Activated CD4-positive, alpha-beta T cell treated with anti-CD3 and anti-CD28 coated beads for 36 hours (primary cell): ENCODE measurements at regions of chr19 and their contacts with region 1.

Region 1: GRCh38 chr19:13952154-13953035 is at the start of gene DCAF15:
- DNase-seq: peak; percentile 100
- ATAC-seq: peak; percentile 99
- H3K4me3 Mint-ChIP-seq: peak within 1 kb of the TSS; percentile 88
- H3K27ac Mint-ChIP-seq: peak within 1 kb of the TSS; percentile 81
- H3K4me1 Mint-ChIP-seq: peaks cover 16% of the 10 kb centered on the region
- H3K27me3 Mint-ChIP-seq: no peaks in the 10 kb centered on the region
- total RNA-seq, gene DCAF15: 55.8 to 61.6 TPM

Region 2: DNA sequence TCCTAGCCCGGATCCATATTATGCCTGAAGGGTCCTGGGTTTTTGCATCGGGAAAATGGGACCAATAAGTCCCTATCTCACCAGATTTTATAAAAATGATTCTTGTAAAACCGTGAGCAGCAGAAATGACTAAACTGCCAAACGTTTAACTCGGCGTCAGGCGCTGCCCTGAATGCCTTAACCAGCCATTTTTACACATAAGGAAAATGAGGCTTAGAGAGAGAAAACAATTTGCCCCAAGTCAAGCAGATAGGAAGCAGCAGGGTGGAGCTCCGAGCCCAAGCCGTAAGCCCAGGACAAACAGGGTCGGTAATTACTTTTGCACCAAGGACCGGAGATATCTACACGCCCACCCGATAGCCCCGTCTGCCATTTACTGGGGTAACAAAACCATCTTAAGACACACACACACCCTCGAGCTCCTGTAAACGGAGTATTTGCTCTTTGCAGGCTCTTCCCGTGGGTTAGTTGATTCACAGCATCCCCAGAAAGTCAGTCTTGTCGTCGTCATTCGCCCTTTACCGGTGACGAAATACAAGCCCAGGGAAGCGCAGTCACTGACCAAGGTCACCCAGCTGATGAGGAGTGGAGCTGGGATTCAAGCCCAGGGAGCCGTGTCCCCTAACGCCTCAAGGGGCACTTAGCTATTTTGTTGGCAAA is 204.1 kb before region 1 on chr19:
- CTCF ChIA-PET with region 1: no interaction called
- POLR2A ChIA-PET with region 1: interaction called, 3 read pairs
- intact Hi-C with region 1: loop called in 1 of 2 experiments (anchors 1 kb)
- DNase-seq: peak; percentile 50
- ATAC-seq: peak; percentile 2
- H3K4me3 Mint-ChIP-seq: peak overlapping the region; percentile 80
- H3K27ac Mint-ChIP-seq: peak overlapping the region; percentile 84
- H3K4me1 Mint-ChIP-seq: peaks cover 30% of the 10 kb centered on the region
- H3K27me3 Mint-ChIP-seq: no peaks in the 10 kb centered on the region

Region 3: DNA sequence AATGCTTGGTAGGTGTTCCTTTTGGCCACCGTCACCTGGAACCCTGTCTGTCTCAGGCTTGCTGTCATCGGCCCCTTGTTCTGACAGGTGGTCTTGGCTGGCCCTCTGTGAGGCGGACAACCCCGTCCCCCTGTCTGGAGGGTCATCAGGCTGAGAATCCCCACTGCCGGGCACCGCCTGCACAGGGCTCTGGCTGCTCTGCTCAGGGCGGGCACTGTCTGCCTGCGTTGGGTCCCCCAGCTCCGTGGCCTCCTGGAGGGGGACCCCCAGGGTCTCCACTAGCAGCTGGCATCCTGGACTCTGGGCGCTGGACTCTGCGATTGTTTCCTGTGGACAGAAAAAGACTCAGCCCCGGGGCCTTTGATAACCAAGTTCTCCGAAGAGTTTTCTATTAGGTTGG is 62.3 kb before region 1 on chr19:
- CTCF ChIA-PET with region 1: no interaction called
- POLR2A ChIA-PET with region 1: no interaction called
- intact Hi-C with region 1: no loop called
- DNase-seq: no peak
- ATAC-seq: no peak
- H3K4me3 Mint-ChIP-seq: no peak overlapping the region
- H3K27ac Mint-ChIP-seq: no peak overlapping the region
- H3K4me1 Mint-ChIP-seq: no peaks in the 10 kb centered on the region
- H3K27me3 Mint-ChIP-seq: no peaks in the 10 kb centered on the region

Region 4: GRCh38 chr19:13905938-13906904 is 46.2 kb before region 1 on chr19 and contains the starts of genes BRME1 and CC2D1A:
- CTCF ChIA-PET with region 1: interaction called, 3 read pairs
- POLR2A ChIA-PET with region 1: no interaction called
- intact Hi-C with region 1: loop called in 1 of 2 experiments (anchors 1 kb)
- DNase-seq: peak; percentile 99
- ATAC-seq: peak; percentile 97
- H3K4me3 Mint-ChIP-seq: peak within 1 kb of the TSS; percentile 75
- H3K27ac Mint-ChIP-seq: peak within 1 kb of the TSS; percentile 93
- H3K4me1 Mint-ChIP-seq: peaks cover 14% of the 10 kb centered on the region
- H3K27me3 Mint-ChIP-seq: no peaks in the 10 kb centered on the region
- total RNA-seq, gene BRME1: 5.3 to 5.5 TPM
- total RNA-seq, gene CC2D1A: 30.2 to 34.3 TPM

Region 5: DNA sequence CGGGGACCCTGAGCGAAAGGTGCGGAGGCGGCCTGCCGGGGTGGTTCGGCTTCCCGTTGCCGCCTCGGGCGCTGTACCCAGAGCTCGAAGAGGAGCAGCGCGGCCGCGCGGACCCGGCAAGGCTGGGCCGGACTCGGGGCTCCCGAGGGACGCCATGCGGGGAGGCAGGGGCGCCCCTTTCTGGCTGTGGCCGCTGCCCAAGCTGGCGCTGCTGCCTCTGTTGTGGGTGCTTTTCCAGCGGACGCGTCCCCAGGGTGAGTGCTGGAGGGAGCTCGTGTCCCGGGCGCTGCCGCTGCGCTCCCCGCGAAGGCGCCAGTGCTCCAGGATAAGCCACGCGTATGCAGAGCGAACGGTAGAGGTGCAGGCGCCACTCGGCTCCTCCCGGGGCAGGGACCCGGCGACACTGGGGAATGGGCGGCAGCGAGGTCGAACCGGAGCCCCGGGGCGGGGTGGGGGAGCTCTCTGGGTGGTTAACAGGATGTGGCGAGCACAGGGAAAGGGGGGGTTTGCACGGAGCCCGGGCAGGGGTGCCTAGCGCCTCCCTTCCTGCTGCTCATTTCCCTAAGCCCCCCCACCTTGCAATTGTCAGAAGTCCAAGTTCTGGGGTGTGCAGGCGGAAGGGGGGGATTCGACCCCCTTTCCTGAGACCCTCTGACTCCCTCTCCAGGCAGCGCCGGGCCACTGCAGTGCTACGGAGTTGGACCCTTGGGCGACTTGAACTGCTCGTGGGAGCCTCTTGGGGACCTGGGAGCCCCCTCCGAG is 79.5 kb after region 1 on chr19 and contains the start of gene IL27RA:
- CTCF ChIA-PET with region 1: interaction called, 4 read pairs
- POLR2A ChIA-PET with region 1: interaction called, 3 read pairs
- intact Hi-C with region 1: loop called (anchors 1 to 5 kb)
- DNase-seq: peak; percentile 83
- ATAC-seq: peak; percentile 79
- H3K4me3 Mint-ChIP-seq: peak within 1 kb of the TSS; percentile 92
- H3K27ac Mint-ChIP-seq: peak within 1 kb of the TSS; percentile 90
- H3K4me1 Mint-ChIP-seq: peaks cover 18% of the 10 kb centered on the region
- H3K27me3 Mint-ChIP-seq: no peaks in the 10 kb centered on the region
- total RNA-seq, gene IL27RA: 49.8 to 52.0 TPM

Region 6: GRCh38 chr19:14081325-14082093 is 129.1 kb after region 1 on chr19:
- CTCF ChIA-PET with region 1: no interaction called
- POLR2A ChIA-PET with region 1: no interaction called
- intact Hi-C with region 1: loop called in 1 of 2 experiments (anchors 1 kb)
- DNase-seq: peak; percentile 99
- ATAC-seq: peak; percentile 95
- H3K4me3 Mint-ChIP-seq: peak overlapping the region; percentile 90
- H3K27ac Mint-ChIP-seq: peak overlapping the region; percentile 92
- H3K4me1 Mint-ChIP-seq: peaks cover 10% of the 10 kb centered on the region
- H3K27me3 Mint-ChIP-seq: no peaks in the 10 kb centered on the region